ENCODE measurements at regions of chr7 and their contacts with region 1.

Region 1: GRCh38 chr7:139422126-139422525 is 61.3 kb downstream of the KLRG2 start:
- DNase-seq: no peak
- ATAC-seq: no peak
- H3K4me3 Mint-ChIP-seq: no peak overlapping the region
- H3K27ac Mint-ChIP-seq: no peak overlapping the region
- H3K4me1 Mint-ChIP-seq: no peaks in the 10 kb centered on the region
- H3K27me3 Mint-ChIP-seq: no peaks in the 10 kb centered on the region

Region 2: GRCh38 chr7:139403601-139404000 is 18.5 kb before region 1 on chr7:
- CTCF ChIA-PET with region 1: interaction called, 3 read pairs
- POLR2A ChIA-PET with region 1: no interaction called
- intact Hi-C with region 1: loop called (anchors 1 kb)
- DNase-seq: no peak
- ATAC-seq: no peak
- H3K4me3 Mint-ChIP-seq: no peak overlapping the region
- H3K27ac Mint-ChIP-seq: no peak overlapping the region
- H3K4me1 Mint-ChIP-seq: no peaks in the 10 kb centered on the region
- H3K27me3 Mint-ChIP-seq: no peaks in the 10 kb centered on the region

Region 3: DNA sequence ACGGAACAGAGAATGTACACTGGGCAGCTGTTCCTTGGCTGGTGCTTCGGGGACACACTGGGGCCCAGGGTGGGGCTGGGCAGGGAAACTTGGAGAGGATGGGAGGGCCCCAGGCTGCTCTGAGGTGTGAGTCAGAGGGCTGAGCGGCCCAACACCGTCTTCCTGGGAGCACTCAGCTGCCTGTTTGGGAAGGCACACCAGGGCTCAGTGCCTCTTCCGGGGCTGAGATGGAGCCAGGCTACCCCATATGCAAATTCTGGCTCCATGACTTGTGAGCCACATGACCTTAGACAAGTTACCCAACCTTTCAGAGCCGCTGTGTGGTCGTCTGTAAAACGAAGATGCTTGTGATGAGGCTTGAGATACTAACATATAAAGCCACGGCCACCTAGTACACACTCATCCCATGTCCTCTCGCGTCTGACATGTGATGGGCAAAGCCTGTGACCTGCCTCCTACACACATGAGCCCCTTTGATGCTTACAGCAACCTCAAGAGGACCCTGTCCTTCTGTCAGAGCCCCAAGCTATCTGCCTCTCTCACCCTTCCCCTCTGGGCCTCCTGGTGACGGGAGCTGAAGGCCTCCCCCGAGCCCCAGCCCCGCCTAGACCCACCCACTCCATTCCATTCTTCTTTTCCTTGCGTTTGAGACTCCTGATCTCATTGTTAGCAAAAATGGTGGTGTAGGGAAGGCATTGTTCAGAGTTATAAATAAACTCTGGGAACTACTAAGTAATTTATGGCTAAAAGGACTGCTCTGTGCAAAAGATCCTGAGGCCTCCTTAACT is 35.2 kb after region 1 on chr7:
- CTCF ChIA-PET with region 1: no interaction called
- POLR2A ChIA-PET with region 1: no interaction called
- intact Hi-C with region 1: no loop called
- DNase-seq: no peak
- ATAC-seq: no peak
- H3K4me3 Mint-ChIP-seq: no peak overlapping the region
- H3K27ac Mint-ChIP-seq: no peak overlapping the region
- H3K4me1 Mint-ChIP-seq: no peaks in the 10 kb centered on the region
- H3K27me3 Mint-ChIP-seq: no peaks in the 10 kb centered on the region

Region 4: GRCh38 chr7:139482662-139483469 is 60.7 kb after region 1 on chr7:
- CTCF ChIA-PET with region 1: no interaction called
- POLR2A ChIA-PET with region 1: no interaction called
- intact Hi-C with region 1: no loop called
- DNase-seq: peak; percentile 47
- ATAC-seq: peak; percentile 17
- H3K4me3 Mint-ChIP-seq: peak overlapping the region; percentile 35
- H3K27ac Mint-ChIP-seq: no peak overlapping the region
- H3K4me1 Mint-ChIP-seq: peaks cover 2% of the 10 kb centered on the region
- H3K27me3 Mint-ChIP-seq: peaks cover 31% of the 10 kb centered on the region

Measured in activated CD4-positive, alpha-beta T cell treated with anti-CD3 and anti-CD28 coated beads for 36 hours (primary cell).